ENCODE measurements at regions of chr2 and their contacts with region 1.

Region 1: DNA sequence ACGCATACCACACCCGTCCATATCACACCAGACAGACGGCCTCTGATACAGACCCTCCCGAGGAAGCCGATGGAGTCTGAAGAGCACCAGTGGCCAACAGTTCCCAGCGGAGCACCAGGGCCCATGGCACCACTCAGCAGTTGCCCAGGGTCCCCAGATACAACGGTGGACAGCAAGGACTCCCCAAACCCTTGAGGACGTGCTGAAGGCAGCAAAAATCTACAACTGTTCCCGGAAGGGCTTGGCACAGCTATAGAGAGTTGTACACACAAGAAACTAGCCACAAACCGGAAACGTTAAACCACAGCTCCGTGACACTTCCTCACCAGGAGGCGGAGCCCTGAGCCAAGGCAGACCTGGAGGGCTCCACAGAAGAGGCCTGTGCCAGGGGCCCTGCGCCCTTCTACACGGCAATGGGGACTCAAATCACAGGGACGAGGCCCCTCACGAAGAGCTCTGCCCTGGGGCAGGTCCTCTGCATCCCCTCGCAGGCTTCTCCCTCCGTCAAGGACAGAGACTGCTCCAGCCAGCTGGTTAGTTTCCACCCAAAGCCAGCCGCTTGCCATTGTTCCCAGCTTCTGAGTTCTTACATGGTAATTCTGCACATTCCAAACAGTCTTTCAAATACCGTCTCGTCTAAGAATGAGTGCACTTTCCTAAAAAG is 133.4 kb downstream of the HDAC4 start:
- DNase-seq: peak; percentile 77 to 97 (median 92)
- ATAC-seq: peak; percentile 82
- H3K4me3 ChIP-seq: peak overlapping the region; percentile 75 to 86
- H3K4me3 Mint-ChIP-seq: peak overlapping the region; percentile 87 to 95 (median 89)
- H3K27ac ChIP-seq: peak overlapping the region; percentile 92
- H3K27ac Mint-ChIP-seq: peak overlapping the region; percentile 98 to 99
- H3K4me1 ChIP-seq: peaks cover 67 to 78% of the 10 kb centered on the region in 2 experiments
- H3K4me1 Mint-ChIP-seq: peaks cover 80 to 90% (median 89%) of the 10 kb centered on the region in 3 donors
- H3K27me3 ChIP-seq: no peaks in the 10 kb centered on the region
- H3K27me3 Mint-ChIP-seq: no peaks in the 10 kb centered on the region

Region 2: GRCh38 chr2:239293775-239294430 is 26.5 kb after region 1 on chr2:
- CTCF ChIA-PET with region 1: interaction called, 8 to 16 read pairs
- POLR2A ChIA-PET with region 1: interaction called, 5 to 14 read pairs
- DNase-seq: peak in 20 of 35 experiments; percentile 16 to 68 (median 38)
- ATAC-seq: peak in 2 of 4 experiments; percentile 21 to 43
- H3K4me3 ChIP-seq: no peak overlapping the region
- H3K4me3 Mint-ChIP-seq: peak overlapping the region; percentile 67 to 77 (median 73)
- H3K27ac ChIP-seq: peak overlapping the region; percentile 21
- H3K27ac Mint-ChIP-seq: peak overlapping the region; percentile 91 to 97
- H3K4me1 ChIP-seq: peaks cover 39 to 71% of the 10 kb centered on the region in 2 experiments
- H3K4me1 Mint-ChIP-seq: peaks cover 68 to 89% (median 82%) of the 10 kb centered on the region in 3 donors
- H3K27me3 ChIP-seq: no peaks in the 10 kb centered on the region
- H3K27me3 Mint-ChIP-seq: no peaks in the 10 kb centered on the region

Region 3: DNA sequence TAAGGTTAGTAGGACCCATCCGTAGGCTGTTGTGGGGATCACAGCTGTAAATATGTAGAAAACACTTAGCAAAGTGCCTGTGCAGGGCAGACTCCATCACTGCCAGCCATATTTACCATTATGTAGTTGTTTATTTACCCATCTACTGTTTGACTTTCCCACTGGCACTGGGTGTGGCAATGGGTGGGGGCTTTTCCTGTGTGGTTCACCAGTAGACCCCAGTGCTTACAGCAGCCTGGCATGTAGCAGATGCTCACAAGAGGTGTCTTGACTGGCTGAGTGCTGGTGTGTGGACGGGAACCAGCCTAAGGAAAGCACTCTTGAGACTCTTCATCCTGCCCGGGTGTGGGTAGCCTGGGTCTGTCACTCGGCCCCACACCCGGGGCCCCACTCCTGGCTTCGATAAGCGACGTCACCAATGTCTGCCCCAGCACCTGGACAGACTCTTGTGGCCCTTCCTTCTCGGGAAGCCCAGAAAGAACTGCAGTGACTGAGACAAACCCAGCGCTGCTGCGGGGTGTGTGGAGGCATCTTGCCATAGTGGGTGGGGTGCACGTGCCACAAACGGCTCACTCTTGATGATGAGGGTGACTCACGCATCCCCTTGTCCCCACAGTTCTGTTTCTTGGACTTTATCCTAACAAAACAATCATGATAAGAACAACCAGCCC is 55.1 kb after region 1 on chr2:
- CTCF ChIA-PET with region 1: interaction called in 1 of 2 experiments, 15 read pairs
- POLR2A ChIA-PET with region 1: interaction called in 1 of 2 experiments, 9 read pairs
- DNase-seq: peak in 17 of 35 experiments; percentile 9 to 57 (median 23)
- ATAC-seq: peak in 3 of 4 experiments; percentile 3 to 10 (median 5)
- H3K4me3 ChIP-seq: no peak overlapping the region
- H3K4me3 Mint-ChIP-seq: peak overlapping the region in 2 of 3 donors; percentile 35 to 54
- H3K27ac ChIP-seq: peak overlapping the region; percentile 88
- H3K27ac Mint-ChIP-seq: peak overlapping the region; percentile 92 to 99
- H3K4me1 ChIP-seq: peaks cover 67 to 69% of the 10 kb centered on the region in 2 experiments
- H3K4me1 Mint-ChIP-seq: peaks cover 77 to 88% (median 81%) of the 10 kb centered on the region in 3 donors
- H3K27me3 ChIP-seq: no peaks in the 10 kb centered on the region
- H3K27me3 Mint-ChIP-seq: no peaks in the 10 kb centered on the region

Region 4: DNA sequence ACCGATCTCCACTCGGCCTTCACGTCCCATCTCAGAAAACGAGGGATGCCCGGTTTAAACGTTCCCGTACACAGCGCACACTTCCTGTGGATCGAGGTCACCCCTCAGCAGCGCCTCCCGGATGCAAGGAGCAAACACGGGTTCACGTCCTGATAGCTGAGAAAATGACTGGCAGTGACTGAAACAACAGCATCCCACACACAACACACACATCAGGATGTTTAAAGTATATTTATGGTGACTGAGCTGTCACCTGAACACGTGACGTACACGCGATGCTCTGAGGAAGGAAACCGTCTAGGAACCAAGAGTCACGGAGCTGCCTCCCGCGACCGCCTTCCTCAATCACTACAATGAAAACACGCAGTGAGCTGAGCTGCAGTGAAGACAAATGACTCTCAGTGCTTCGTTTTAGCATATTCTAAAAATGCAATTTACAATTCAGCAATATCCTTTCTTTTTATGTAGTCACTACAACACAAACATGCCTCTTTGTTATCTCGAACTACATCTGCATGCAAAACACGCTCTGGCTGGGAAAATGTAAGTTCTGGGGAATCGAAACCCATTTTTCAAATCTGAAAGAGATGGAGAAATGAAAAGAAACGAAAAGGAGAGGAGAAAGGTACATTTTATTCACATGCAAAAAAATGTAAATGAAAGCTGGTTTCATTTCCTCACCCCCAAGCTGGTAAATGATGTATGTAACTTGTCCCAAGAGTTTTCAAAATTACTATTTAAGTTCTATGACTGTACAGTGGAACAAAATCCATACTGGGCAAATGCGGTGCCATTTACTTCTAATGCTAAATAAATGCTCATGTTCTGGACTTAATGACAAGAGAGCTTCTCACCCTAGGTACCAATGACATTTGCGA is 113.7 kb after region 1 on chr2:
- CTCF ChIA-PET with region 1: interaction called in 1 of 2 experiments, 16 read pairs
- POLR2A ChIA-PET with region 1: interaction called in 1 of 2 experiments, 3 read pairs
- DNase-seq: peak in 34 of 35 experiments; percentile 50 to 88 (median 74)
- ATAC-seq: peak; percentile 87 to 93 (median 91)
- H3K4me3 ChIP-seq: peak overlapping the region; percentile 37 to 51
- H3K4me3 Mint-ChIP-seq: peak overlapping the region; percentile 73 to 82 (median 78)
- H3K27ac ChIP-seq: peak overlapping the region; percentile 57
- H3K27ac Mint-ChIP-seq: peak overlapping the region; percentile 81 to 96
- H3K4me1 ChIP-seq: peaks cover 21% of the 10 kb centered on the region in 2 experiments
- H3K4me1 Mint-ChIP-seq: peaks cover 25 to 36% (median 29%) of the 10 kb centered on the region in 3 donors
- H3K27me3 ChIP-seq: no peaks in the 10 kb centered on the region
- H3K27me3 Mint-ChIP-seq: no peaks in the 10 kb centered on the region

Region 5: DNA sequence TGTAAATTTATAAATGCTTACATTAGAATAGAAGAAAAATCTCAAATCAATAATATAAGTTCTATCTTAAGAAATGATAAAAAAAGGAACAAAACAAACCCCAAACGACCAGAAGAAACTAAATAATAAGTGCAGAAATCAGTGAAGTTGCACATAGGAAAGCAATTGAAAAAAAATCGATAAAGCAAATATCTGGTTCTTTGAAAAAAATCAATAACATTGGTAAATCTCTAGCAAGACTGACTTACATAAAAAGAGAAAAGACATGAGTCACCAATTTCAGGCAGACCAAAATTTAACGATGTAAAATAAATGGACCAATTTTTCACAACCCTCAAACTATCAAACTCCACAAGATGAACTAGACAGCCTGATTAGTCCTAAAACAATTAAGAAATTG is 383.3 kb after region 1 on chr2:
- CTCF ChIA-PET with region 1: no interaction called
- POLR2A ChIA-PET with region 1: interaction called in 1 of 2 experiments, 10 read pairs
- DNase-seq: no peak
- ATAC-seq: no peak
- H3K4me3 ChIP-seq: no peak overlapping the region
- H3K4me3 Mint-ChIP-seq: no peak overlapping the region
- H3K27ac ChIP-seq: no peak overlapping the region
- H3K27ac Mint-ChIP-seq: no peak overlapping the region
- H3K4me1 ChIP-seq: peaks cover 0 to 7% of the 10 kb centered on the region in 2 experiments
- H3K4me1 Mint-ChIP-seq: peaks cover 0 to 6% (median 0%) of the 10 kb centered on the region in 3 donors
- H3K27me3 ChIP-seq: peaks cover 0 to 5% of the 10 kb centered on the region in 2 experiments
- H3K27me3 Mint-ChIP-seq: peaks cover 0 to 2% of the 10 kb centered on the region in 2 donors